PC-3 (cell line): ENCODE measurements at regions of chr17 and their contacts with region 1.

Region 1: DNA sequence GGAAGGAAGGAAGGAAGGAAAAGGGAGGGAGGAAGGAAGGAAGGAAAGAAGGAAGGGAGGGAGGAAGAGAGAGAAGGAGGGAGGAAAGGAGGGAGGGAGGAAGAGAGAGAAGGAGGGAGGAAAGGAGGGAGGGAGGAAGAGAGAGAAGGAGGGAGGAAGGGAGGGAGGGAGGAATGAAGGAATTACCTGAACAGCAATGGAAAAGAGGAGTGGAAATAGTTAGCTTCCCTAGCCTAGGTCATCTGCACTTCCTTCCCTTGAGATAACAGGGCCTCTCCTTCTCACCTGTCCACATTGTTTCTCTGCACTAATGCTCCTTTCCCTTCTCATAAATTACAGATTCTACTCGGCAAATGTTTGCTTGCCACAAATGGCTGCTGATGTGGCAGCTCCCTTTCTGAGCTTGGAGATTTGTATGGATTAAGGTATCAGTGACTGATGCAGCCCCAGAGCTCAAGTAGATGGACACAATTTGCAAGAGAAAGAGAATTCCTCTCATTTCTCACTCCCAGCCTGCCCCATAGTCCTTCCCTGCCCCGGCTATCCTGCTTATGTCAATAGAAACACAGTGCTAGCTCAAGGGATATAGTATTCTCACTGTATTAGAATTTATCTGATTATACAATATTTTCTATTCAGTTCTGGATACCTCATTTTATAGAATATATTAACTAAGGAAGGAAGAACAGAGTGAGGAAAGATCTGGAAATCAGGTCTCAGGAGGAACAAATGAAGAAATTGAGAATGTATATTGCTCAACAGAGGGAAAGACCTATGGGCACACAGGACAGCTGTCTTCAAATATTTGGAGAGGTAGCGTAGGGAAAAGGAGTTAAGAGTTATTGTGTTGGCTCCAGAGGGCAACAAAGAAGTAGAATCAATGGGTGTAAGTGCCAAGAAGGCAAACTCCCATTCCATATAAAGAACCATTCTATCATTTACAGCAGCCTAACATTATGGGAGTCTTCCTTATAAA is 14.6 kb downstream of the HOXB1 start:
- DNase-seq: no peak
- ATAC-seq: no peak
- H3K4me3 ChIP-seq: no peak overlapping the region
- H3K27ac ChIP-seq: no peak overlapping the region
- H3K4me1 ChIP-seq: peaks cover 18% of the 10 kb centered on the region
- H3K27me3 ChIP-seq: no peaks in the 10 kb centered on the region
- CTCF ChIP-seq: no peak

Region 2: GRCh38 chr17:48472411-48473281 is 43.6 kb before region 1 on chr17:
- CTCF ChIA-PET with region 1: no interaction called
- POLR2A ChIA-PET with region 1: interaction called, 20 read pairs
- intact Hi-C with region 1: no loop called
- DNase-seq: peak; percentile 96
- ATAC-seq: peak; percentile 90
- H3K4me3 ChIP-seq: peak overlapping the region; percentile 26; the same call in 1 of the 2 replicates
- H3K27ac ChIP-seq: peak overlapping the region; percentile 93
- H3K4me1 ChIP-seq: peaks cover 24% of the 10 kb centered on the region
- H3K27me3 ChIP-seq: no peaks in the 10 kb centered on the region
- CTCF ChIP-seq: no peak